Activated CD4-positive, alpha-beta memory T cell treated with anti-CD3 and anti-CD28 coated beads for 36 hours (primary cell): ENCODE measurements at regions of chrX and their contacts with region 1.

Region 1: GRCh38 chrX:9708904-9709553 is 56.6 kb downstream of the GPR143 start:
- DNase-seq: peak; percentile 79
- H3K4me3 Mint-ChIP-seq: no peak overlapping the region
- H3K27ac Mint-ChIP-seq: no peak overlapping the region
- H3K4me1 Mint-ChIP-seq: peaks cover 8% of the 10 kb centered on the region
- H3K27me3 Mint-ChIP-seq: no peaks in the 10 kb centered on the region

Region 2: DNA sequence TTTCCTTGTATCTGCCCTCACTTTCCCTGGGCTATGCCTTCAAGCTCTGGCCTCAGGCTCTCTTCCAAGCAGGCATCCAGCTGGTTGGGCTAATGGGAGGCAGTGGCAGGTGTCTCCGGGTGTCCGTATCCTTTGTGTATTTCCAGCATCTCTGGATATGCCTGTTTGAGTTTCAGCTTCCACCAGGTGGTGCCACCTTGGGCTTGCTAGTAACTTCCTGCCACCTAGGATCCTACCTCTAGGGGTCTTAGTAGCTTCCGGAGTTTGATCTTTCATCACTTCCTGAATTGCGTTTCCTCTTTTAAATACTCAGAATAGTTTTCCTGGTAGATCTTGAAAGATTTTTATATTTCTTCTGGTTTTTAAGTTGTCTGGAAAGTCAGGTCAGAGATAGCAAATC is 953.9 kb before region 1 on chrX:
- CTCF ChIA-PET with region 1: no interaction called
- POLR2A ChIA-PET with region 1: no interaction called
- intact Hi-C with region 1: loop called (anchors 10 kb)
- DNase-seq: no peak
- H3K4me3 Mint-ChIP-seq: no peak overlapping the region
- H3K27ac Mint-ChIP-seq: no peak overlapping the region
- H3K4me1 Mint-ChIP-seq: no peaks in the 10 kb centered on the region
- H3K27me3 Mint-ChIP-seq: peaks cover 1% of the 10 kb centered on the region

Region 3: DNA sequence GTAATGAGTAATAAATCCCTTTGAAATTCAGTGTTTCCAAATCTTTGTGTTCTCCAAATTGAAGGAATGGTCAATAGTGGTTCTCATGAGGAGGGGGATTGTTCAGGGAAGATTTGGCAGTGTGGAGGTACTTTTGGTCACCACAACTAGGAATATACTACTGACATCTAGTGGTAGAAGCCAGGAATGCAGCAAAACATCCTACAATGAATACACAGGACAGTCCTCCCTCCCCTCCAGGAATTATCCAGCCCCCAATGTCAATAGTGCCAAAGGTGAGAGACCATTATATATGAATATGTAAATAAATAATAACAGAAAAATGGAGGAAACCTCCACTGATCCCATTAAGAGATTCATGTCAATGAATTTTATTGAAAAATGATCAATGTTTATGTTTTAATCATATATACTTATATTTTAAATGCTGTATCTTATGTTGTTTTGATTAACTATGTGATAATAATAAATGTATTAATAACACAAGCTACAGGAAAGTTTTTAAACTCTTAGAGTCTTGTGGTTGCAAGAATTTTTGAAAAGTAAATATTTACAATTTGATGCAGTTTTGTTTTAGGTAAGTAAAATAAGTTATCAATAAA is 893.5 kb before region 1 on chrX:
- CTCF ChIA-PET with region 1: no interaction called
- POLR2A ChIA-PET with region 1: no interaction called
- intact Hi-C with region 1: loop called (anchors 5 kb)
- DNase-seq: no peak
- H3K4me3 Mint-ChIP-seq: no peak overlapping the region
- H3K27ac Mint-ChIP-seq: no peak overlapping the region
- H3K4me1 Mint-ChIP-seq: no peaks in the 10 kb centered on the region
- H3K27me3 Mint-ChIP-seq: peaks cover 2% of the 10 kb centered on the region

Region 4: GRCh38 chrX:8971116-8971515 is 737.9 kb before region 1 on chrX:
- CTCF ChIA-PET with region 1: no interaction called
- POLR2A ChIA-PET with region 1: no interaction called
- intact Hi-C with region 1: loop called (anchors 1 kb)
- DNase-seq: no peak
- H3K4me3 Mint-ChIP-seq: no peak overlapping the region
- H3K27ac Mint-ChIP-seq: no peak overlapping the region
- H3K4me1 Mint-ChIP-seq: no peaks in the 10 kb centered on the region
- H3K27me3 Mint-ChIP-seq: no peaks in the 10 kb centered on the region

Region 5: GRCh38 chrX:9341291-9342201 is 367.5 kb before region 1 on chrX:
- CTCF ChIA-PET with region 1: no interaction called
- POLR2A ChIA-PET with region 1: no interaction called
- intact Hi-C with region 1: loop called (anchors 5 kb)
- DNase-seq: peak; percentile 76
- H3K4me3 Mint-ChIP-seq: peak overlapping the region; percentile 30
- H3K27ac Mint-ChIP-seq: peak overlapping the region; percentile 84
- H3K4me1 Mint-ChIP-seq: peaks cover 30% of the 10 kb centered on the region
- H3K27me3 Mint-ChIP-seq: no peaks in the 10 kb centered on the region